Activated CD4-positive, alpha-beta T cell treated with anti-CD3 and anti-CD28 coated beads, Interleukin-2, amount 10 ng/mL, durations not matched to agents 24 days and 14 days (primary cell): ENCODE measurements at regions of chr6 and their contacts with region 1.

Region 1: GRCh38 chr6:157867155-157867559 is 44.1 kb downstream of the SNX9 start:
- DNase-seq: peak; percentile 75
- H3K4me3 Mint-ChIP-seq: peak overlapping the region; percentile 41
- H3K27ac Mint-ChIP-seq: peak overlapping the region; percentile 38
- H3K4me1 Mint-ChIP-seq: peaks cover 27% of the 10 kb centered on the region
- H3K27me3 Mint-ChIP-seq: peaks cover 15% of the 10 kb centered on the region

Region 2: GRCh38 chr6:157885211-157885788 is 18.1 kb after region 1 on chr6:
- intact Hi-C with region 1: loop called (anchors 2 kb)
- DNase-seq: peak; percentile 88
- H3K4me3 Mint-ChIP-seq: peak overlapping the region; percentile 28
- H3K27ac Mint-ChIP-seq: peak overlapping the region; percentile 83
- H3K4me1 Mint-ChIP-seq: peaks cover 41% of the 10 kb centered on the region
- H3K27me3 Mint-ChIP-seq: no peaks in the 10 kb centered on the region

Region 3: GRCh38 chr6:157905590-157906342 is 38.6 kb after region 1 on chr6:
- intact Hi-C with region 1: no loop called
- DNase-seq: no peak
- H3K4me3 Mint-ChIP-seq: no peak overlapping the region
- H3K27ac Mint-ChIP-seq: no peak overlapping the region
- H3K4me1 Mint-ChIP-seq: peaks cover 21% of the 10 kb centered on the region
- H3K27me3 Mint-ChIP-seq: no peaks in the 10 kb centered on the region